ENCODE measurements at regions of chr12 and their contacts with region 1.

Region 1: DNA sequence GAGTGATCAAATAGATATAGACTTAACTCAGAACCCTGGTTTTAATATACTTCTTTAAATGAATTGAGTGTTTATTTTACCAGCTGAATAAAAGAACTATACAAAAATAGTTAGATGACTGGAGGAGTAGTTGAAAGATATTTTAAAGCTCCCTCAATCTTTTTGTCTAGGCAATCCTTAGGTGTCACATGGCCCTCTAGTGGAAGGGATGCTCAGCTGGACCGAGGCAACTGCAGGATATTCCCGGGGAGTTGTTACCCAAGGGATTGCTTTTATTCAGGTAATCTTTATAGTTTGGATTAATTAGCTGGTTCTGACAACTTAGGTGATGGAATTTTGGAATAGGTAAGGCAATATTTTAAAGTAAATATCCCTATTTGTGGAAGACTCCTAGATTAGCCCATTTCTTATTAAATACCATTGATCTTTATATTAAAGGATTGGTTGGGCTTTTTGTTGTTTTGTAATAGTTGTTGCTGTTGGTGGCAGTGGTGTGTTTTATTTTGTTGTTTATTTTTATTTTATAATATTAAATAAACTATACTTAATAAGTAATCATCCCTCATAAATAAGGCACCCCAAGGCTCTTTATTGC is 57.1 kb downstream of the ZDHHC17 start:
- DNase-seq: peak; percentile 50
- H3K4me3 Mint-ChIP-seq: no peak overlapping the region
- H3K27ac Mint-ChIP-seq: no peak overlapping the region
- H3K4me1 Mint-ChIP-seq: no peaks in the 10 kb centered on the region
- H3K27me3 Mint-ChIP-seq: no peaks in the 10 kb centered on the region
- CTCF ChIP-seq: peak; percentile 50

Region 2: GRCh38 chr12:76366163-76366562 is 454.8 kb before region 1 on chr12:
- CTCF ChIA-PET with region 1: no interaction called
- intact Hi-C with region 1: no loop called
- DNase-seq: no peak
- H3K4me3 Mint-ChIP-seq: no peak overlapping the region
- H3K27ac Mint-ChIP-seq: no peak overlapping the region
- H3K4me1 Mint-ChIP-seq: no peaks in the 10 kb centered on the region
- H3K27me3 Mint-ChIP-seq: no peaks in the 10 kb centered on the region
- CTCF ChIP-seq: no peak

Region 3: DNA sequence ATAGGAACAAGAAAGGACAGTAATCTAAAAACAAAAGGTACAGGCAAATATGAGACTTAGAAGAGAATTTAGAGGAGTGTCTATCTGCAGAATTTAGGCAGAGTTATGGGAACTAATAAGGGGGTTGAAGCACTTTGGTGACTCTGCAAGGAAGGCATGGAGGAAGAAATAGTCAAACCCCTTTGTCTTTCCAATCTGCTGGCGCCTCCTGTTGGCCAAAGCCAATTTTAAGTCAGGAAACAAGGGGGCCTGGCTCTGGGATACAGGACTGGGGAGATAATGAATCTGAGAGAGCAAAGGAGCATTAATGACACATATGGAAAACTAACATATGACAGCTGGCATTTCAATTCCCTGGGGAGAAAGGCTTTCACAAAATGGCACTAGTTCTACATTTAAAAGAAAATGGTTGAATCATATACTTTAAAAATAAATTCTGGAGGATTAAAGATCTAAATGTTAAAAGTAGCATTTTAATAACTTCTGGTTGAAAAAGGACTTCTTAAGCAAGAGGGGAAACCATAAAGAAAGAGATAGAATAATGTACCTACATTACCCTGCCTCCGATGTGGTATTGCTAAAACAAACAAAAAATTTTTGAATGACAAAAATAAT is 106.3 kb after region 1 on chr12:
- CTCF ChIA-PET with region 1: no interaction called
- intact Hi-C with region 1: loop called (anchors 10 kb)
- DNase-seq: peak; percentile 43
- H3K4me3 Mint-ChIP-seq: no peak overlapping the region
- H3K27ac Mint-ChIP-seq: no peak overlapping the region
- H3K4me1 Mint-ChIP-seq: no peaks in the 10 kb centered on the region
- H3K27me3 Mint-ChIP-seq: peaks cover 21% of the 10 kb centered on the region
- CTCF ChIP-seq: peak; percentile 38

Measured in Calu3 (cell line).